Mammary epithelial cell (primary cell): ENCODE measurements at regions of chr6 and their contacts with region 1.

Region 1: DNA sequence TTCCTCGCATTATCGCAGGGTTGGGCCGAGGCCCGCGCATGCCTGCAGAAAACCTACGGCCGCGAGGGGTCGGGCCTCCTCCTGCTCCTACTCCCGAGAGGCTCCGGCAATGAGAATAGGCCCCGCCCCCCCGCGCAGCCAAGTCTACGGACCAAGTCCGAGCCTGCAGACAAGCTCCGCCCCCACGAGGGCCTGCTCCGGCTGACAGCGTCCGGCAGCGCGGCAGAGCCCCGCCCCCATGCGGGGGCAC is 3.1 kb upstream of the GPSM3 start:
- DNase-seq: peak; percentile 100
- H3K4me3 ChIP-seq: peak overlapping the region in 1 of 3 experiments; percentile 74
- H3K27ac ChIP-seq: peak overlapping the region; percentile 98
- H3K4me1 ChIP-seq: peaks cover 26% of the 10 kb centered on the region
- H3K27me3 ChIP-seq: no peaks in the 10 kb centered on the region
- CTCF ChIP-seq: peak; percentile 19 to 56

Region 2: GRCh38 chr6:31739639-31740396 is 455.8 kb before region 1 on chr6 and contains the start of gene MSH5:
- CTCF ChIA-PET with region 1: no interaction called
- dilution Hi-C with region 1: no loop called
- in situ Hi-C with region 1: no loop called
- intact Hi-C with region 1: loop called (anchors 10 kb)
- DNase-seq: peak; percentile 99
- H3K4me3 ChIP-seq: peak within 1 kb of the TSS; percentile 67 to 76 (median 74)
- H3K27ac ChIP-seq: peak within 1 kb of the TSS; percentile 83
- H3K4me1 ChIP-seq: peaks cover 34% of the 10 kb centered on the region
- H3K27me3 ChIP-seq: no peaks in the 10 kb centered on the region
- CTCF ChIP-seq: no peak
- total RNA-seq, gene MSH5: 9.3 to 28.3 TPM

Region 3: GRCh38 chr6:31763619-31763940 is 432.0 kb before region 1 on chr6:
- CTCF ChIA-PET with region 1: no interaction called
- dilution Hi-C with region 1: no loop called
- in situ Hi-C with region 1: no loop called
- intact Hi-C with region 1: no loop called
- DNase-seq: peak; percentile 33
- H3K4me3 ChIP-seq: no peak overlapping the region
- H3K27ac ChIP-seq: no peak overlapping the region
- H3K4me1 ChIP-seq: peaks cover 12% of the 10 kb centered on the region
- H3K27me3 ChIP-seq: no peaks in the 10 kb centered on the region
- CTCF ChIP-seq: no peak

Region 4: GRCh38 chr6:32118782-32119628 is 76.6 kb before region 1 on chr6:
- CTCF ChIA-PET with region 1: interaction called, 7 read pairs
- dilution Hi-C with region 1: no loop called
- in situ Hi-C with region 1: no loop called
- intact Hi-C with region 1: loop called (anchors 1 kb)
- DNase-seq: peak; percentile 65
- H3K4me3 ChIP-seq: no peak overlapping the region
- H3K27ac ChIP-seq: no peak overlapping the region
- H3K4me1 ChIP-seq: peaks cover 5% of the 10 kb centered on the region
- H3K27me3 ChIP-seq: no peaks in the 10 kb centered on the region
- CTCF ChIP-seq: peak; percentile 88 to 90

Region 5: DNA sequence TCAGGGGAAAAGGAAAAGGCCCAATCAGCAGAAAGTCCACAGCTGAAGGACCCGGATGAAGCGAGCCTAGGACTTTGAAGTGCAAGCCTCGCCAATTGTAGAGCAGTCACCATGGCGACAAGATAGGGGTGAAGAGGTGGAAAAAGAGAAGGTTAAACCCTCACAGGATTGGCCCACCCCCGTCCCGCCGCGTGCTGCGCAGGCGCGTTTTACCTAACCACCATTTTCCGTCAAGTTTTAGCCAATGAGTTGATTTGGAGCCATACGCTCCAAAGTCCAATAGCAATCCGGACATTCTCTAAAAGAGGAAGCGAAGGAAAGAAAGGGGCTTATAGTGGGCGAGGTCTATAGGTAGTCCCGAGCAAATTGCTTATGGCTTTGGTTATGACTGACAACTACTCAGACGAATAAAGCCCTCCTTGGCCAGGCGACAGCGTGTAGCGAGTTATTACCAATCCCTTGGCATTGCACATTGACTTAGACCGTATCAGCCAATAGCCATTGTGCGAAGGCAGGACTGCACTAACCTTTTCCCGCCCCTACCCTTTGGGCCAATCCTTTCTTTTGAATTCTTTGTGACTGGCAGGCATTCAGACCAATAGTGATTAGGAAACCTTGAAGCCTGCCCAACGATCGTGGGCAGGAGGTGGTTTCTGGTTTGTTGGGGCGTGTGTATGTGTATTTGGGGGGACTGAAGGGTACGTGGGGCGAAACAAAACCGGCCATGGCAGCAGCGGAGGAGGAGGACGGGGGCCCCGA is 17.6 kb before region 1 on chr6 and contains the start of gene RNF5:
- CTCF ChIA-PET with region 1: interaction called, 10 read pairs
- dilution Hi-C with region 1: no loop called
- in situ Hi-C with region 1: no loop called
- intact Hi-C with region 1: loop called (anchors 1 kb)
- DNase-seq: peak; percentile 100
- H3K4me3 ChIP-seq: peak within 1 kb of the TSS; percentile 52 to 94 (median 69)
- H3K27ac ChIP-seq: peak within 1 kb of the TSS; percentile 94
- H3K4me1 ChIP-seq: peaks cover 36% of the 10 kb centered on the region
- H3K27me3 ChIP-seq: no peaks in the 10 kb centered on the region
- CTCF ChIP-seq: no peak
- total RNA-seq, gene RNF5: 28.4 to 28.7 TPM

Region 6: DNA sequence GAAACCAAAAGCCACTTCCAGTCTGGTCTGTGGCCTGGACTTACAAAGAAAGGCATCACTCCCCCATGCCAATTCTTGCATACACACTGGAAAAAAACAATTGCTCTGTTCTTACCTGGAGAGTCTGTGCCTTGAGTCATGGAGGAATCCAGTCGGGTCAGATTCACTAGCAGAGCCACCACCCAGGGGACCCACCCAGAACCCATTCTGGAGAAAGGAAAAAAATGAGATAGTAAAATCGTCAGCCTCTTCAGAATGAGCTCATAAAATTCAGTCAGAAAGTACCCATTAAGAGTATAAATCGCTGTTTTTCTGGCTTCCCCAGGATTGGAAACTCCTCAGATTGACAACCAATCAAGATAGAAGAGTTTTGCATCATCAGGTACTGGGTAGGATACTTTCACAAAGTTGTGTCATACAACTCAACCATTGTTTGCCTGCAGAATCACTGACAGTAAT is 621.2 kb after region 1 on chr6 and contains the start of gene HLA-DOB:
- CTCF ChIA-PET with region 1: no interaction called
- dilution Hi-C with region 1: no loop called
- in situ Hi-C with region 1: no loop called
- intact Hi-C with region 1: loop called (anchors 5 kb)
- DNase-seq: peak; percentile 92
- H3K4me3 ChIP-seq: peak within 1 kb of the TSS; percentile 1 to 15 (median 2)
- H3K27ac ChIP-seq: peak within 1 kb of the TSS; percentile 78
- H3K4me1 ChIP-seq: peaks cover 57% of the 10 kb centered on the region
- H3K27me3 ChIP-seq: no peaks in the 10 kb centered on the region
- CTCF ChIP-seq: no peak
- total RNA-seq, gene HLA-DOB: 5.5 to 8.3 TPM